ENCODE measurements at regions of chr1 and their contacts with region 1.

Region 1: GRCh38 chr1:220407191-220407590 is 120.7 kb upstream of the MARK1 start:
- DNase-seq: no peak
- ATAC-seq: no peak
- H3K4me3 Mint-ChIP-seq: no peak overlapping the region
- H3K27ac Mint-ChIP-seq: no peak overlapping the region
- H3K4me1 Mint-ChIP-seq: peaks cover 25% of the 10 kb centered on the region
- H3K27me3 Mint-ChIP-seq: peaks cover 4% of the 10 kb centered on the region; the same call in 1 of the 2 replicates
- CTCF ChIP-seq: no peak

Region 2: GRCh38 chr1:220378571-220379302 is 28.5 kb before region 1 on chr1:
- CTCF ChIA-PET with region 1: no interaction called
- POLR2A ChIA-PET with region 1: interaction called, 11 read pairs
- DNase-seq: no peak
- ATAC-seq: peak; percentile 42
- H3K4me3 Mint-ChIP-seq: no peak overlapping the region
- H3K27ac Mint-ChIP-seq: no peak overlapping the region
- H3K4me1 Mint-ChIP-seq: peaks cover 37% of the 10 kb centered on the region
- H3K27me3 Mint-ChIP-seq: peaks cover 3% of the 10 kb centered on the region; the same call in 1 of the 2 replicates
- CTCF ChIP-seq: no peak

Region 3: GRCh38 chr1:220498188-220498587 is 91.0 kb after region 1 on chr1:
- CTCF ChIA-PET with region 1: no interaction called
- POLR2A ChIA-PET with region 1: no interaction called
- DNase-seq: no peak
- ATAC-seq: no peak
- H3K4me3 Mint-ChIP-seq: no peak overlapping the region
- H3K27ac Mint-ChIP-seq: no peak overlapping the region
- H3K4me1 Mint-ChIP-seq: peaks cover 3% of the 10 kb centered on the region; the same call in 1 of the 2 replicates
- H3K27me3 Mint-ChIP-seq: no peaks in the 10 kb centered on the region; the same call in 1 of the 2 replicates
- CTCF ChIP-seq: no peak